ENCODE measurements at regions of chr17 and their contacts with region 1.

Region 1: DNA sequence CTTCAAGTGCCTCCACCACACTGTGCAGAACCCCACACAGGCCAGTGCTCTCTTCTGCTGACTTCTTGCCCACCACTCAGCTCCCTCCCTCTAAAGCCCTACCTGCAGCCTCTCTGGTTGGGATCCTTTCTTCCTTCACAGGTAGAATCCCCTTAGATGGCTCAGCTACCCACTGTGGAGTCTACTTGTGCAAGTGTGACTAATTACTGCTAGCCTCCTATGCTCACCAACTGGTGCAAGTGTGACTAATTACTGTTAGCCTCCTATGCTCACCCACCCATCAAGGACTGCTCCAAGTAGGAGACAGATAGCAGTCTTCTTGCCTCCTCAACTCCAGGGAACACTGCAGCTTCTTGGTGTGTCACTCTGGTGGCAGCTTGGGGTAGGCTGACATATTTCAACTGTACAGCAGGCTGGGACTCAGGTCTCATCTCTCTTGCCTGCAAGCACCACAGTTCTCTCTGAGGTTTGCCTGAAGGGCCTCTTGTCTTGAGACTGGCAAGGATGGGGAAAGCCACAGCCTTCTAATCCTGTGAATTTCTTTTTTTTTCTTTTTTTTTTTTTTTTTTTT is 43.5 kb downstream of the TEX14 start:
- DNase-seq: no peak
- ATAC-seq: peak; percentile 47
- H3K4me3 Mint-ChIP-seq: no peak overlapping the region
- H3K27ac Mint-ChIP-seq: no peak overlapping the region
- H3K4me1 Mint-ChIP-seq: no peaks in the 10 kb centered on the region
- H3K27me3 Mint-ChIP-seq: no peaks in the 10 kb centered on the region
- CTCF ChIP-seq: no peak

Region 2: DNA sequence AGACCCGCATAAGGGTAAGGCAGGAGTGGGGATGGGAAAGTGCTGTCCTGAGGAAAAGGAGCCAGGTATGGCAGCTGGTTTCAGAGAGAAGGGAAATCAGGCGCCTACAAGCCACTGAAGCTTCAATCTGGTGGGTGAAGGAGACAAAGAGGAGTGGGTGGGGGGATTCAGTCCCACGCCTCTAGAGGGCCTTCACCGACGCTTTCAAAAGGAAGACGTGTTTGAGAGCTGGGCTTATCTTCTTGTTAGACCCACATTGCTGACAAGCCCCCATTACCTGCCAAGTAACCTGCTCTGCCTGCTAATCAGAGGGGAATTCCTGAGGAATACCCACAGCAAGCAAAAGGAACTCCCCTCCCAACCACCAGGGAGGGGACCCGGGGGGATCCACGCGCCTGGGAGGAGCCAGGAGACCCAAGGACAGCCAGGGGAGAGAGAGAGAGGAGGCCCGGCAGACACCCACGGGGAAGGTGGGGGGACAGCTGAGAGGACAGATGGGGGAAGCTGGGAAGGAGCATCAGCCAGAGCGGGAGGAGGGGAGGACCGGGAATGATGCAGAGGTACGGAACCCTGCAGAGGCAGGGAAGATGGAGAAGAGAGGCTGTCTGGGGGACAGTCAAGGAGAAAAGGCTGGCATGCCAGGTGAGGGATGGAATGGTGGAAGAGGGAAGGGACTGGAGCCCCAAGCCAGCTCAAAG is 134.9 kb before region 1 on chr17:
- CTCF ChIA-PET with region 1: no interaction called
- POLR2A ChIA-PET with region 1: no interaction called
- intact Hi-C with region 1: no loop called
- DNase-seq: peak; percentile 50
- ATAC-seq: no peak
- H3K4me3 Mint-ChIP-seq: peak overlapping the region; percentile 90
- H3K27ac Mint-ChIP-seq: peak overlapping the region; percentile 87
- H3K4me1 Mint-ChIP-seq: peaks cover 47% of the 10 kb centered on the region
- H3K27me3 Mint-ChIP-seq: no peaks in the 10 kb centered on the region
- CTCF ChIP-seq: no peak

Region 3: GRCh38 chr17:58605470-58605869 is 42.9 kb before region 1 on chr17:
- CTCF ChIA-PET with region 1: no interaction called
- POLR2A ChIA-PET with region 1: no interaction called
- intact Hi-C with region 1: no loop called
- DNase-seq: no peak
- ATAC-seq: peak; percentile 45
- H3K4me3 Mint-ChIP-seq: no peak overlapping the region
- H3K27ac Mint-ChIP-seq: no peak overlapping the region
- H3K4me1 Mint-ChIP-seq: peaks cover 7% of the 10 kb centered on the region
- H3K27me3 Mint-ChIP-seq: no peaks in the 10 kb centered on the region
- CTCF ChIP-seq: no peak

Region 4: GRCh38 chr17:58658804-58659713 is 10.7 kb after region 1 on chr17:
- CTCF ChIA-PET with region 1: no interaction called
- POLR2A ChIA-PET with region 1: interaction called, 19 read pairs
- intact Hi-C with region 1: no loop called
- DNase-seq: peak; percentile 93
- ATAC-seq: peak; percentile 91
- H3K4me3 Mint-ChIP-seq: peak overlapping the region; percentile 72
- H3K27ac Mint-ChIP-seq: peak overlapping the region; percentile 99
- H3K4me1 Mint-ChIP-seq: peaks cover 18% of the 10 kb centered on the region
- H3K27me3 Mint-ChIP-seq: peaks cover 9% of the 10 kb centered on the region
- CTCF ChIP-seq: no peak

Region 5: DNA sequence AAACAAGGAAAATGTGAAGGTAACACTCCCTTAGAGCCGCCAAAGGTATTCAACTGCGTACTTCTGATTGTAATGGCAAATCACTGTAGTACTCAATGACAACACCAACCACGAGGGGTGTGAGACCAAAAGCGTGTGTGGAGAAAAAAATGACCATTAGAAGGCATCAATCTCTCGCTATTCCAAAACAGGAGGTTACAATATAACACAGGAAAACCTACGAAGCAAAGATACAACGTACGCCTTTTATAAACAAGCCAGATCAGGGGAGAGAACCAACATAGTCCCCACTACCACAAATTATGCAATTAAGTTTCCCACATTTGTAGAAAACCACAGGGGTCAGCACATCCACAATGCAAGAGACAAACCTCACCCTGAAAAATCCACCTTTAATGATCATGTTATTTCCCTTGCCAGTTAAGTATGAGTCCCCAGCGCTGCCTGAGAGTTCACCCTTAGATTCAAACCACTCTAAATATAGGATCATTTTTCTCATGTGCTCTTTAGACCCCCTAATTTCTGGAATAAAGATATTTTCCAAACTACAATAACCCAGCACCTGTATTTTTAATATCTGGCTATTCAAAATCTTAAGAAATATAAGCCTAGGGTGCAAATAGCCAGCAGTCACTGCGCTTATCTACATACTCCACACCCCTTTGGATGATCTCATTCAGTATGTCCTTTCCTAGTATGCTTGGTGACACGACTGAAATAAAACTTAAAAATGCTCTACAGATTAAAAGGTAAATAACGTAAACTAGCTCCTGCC is 31.1 kb after region 1 on chr17:
- CTCF ChIA-PET with region 1: no interaction called
- POLR2A ChIA-PET with region 1: no interaction called
- intact Hi-C with region 1: no loop called
- DNase-seq: no peak
- ATAC-seq: no peak
- H3K4me3 Mint-ChIP-seq: no peak overlapping the region
- H3K27ac Mint-ChIP-seq: no peak overlapping the region
- H3K4me1 Mint-ChIP-seq: no peaks in the 10 kb centered on the region
- H3K27me3 Mint-ChIP-seq: peaks cover 4% of the 10 kb centered on the region
- CTCF ChIP-seq: no peak

Measured in activated CD8-positive, alpha-beta T cell treated with anti-CD3 and anti-CD28 coated beads for 36 hours (primary cell).